ENCODE measurements at regions of chr1 and their contacts with region 1.

Region 1: GRCh38 chr1:243568793-243569192 is 281.2 kb downstream of the AKT3 start:
- DNase-seq: peak; percentile 69
- H3K4me3 ChIP-seq: no peak overlapping the region
- H3K27ac ChIP-seq: no peak overlapping the region
- H3K4me1 ChIP-seq: peaks cover 3% of the 10 kb centered on the region
- H3K27me3 ChIP-seq: no peaks in the 10 kb centered on the region
- CTCF ChIP-seq: no peak
- POLR2A ChIP-seq: no peak

Region 2: DNA sequence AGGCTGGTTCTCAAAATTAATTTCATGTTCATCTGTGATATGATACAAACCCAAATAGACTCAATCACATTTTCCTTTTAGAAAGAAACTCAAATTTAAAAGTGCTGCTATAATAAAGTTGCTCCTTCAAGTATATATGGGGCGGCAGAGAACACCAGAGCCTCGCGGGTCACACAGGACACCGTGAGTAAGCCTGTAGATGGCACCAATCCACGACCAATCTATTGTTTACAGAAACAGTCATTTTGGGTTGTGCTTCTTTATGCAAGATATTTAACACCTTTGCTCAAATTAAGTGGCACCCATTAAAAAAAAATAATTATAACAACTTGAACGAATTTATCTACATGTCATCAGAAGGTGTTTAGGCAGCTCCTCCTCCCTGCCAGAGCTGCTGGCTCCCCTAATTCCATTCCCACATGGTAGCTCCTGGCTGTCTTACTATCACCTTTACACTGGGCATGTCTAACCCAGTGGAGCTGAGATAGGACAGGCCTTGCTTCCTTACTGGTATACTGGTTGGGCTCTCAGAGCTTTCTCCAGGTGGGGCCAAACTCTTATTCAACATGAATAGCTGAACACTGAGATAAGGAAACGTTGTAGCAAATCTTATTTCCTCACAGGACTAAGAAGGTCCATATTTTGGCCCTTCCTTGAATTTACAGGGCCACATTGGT is 25.9 kb before region 1 on chr1:
- CTCF ChIA-PET with region 1: no interaction called
- POLR2A ChIA-PET with region 1: no interaction called
- dilution Hi-C with region 1: no loop called
- intact Hi-C with region 1: loop called (anchors 1 kb)
- DNase-seq: no peak
- H3K4me3 ChIP-seq: no peak overlapping the region
- H3K27ac ChIP-seq: no peak overlapping the region
- H3K4me1 ChIP-seq: no peaks in the 10 kb centered on the region
- H3K27me3 ChIP-seq: no peaks in the 10 kb centered on the region
- CTCF ChIP-seq: no peak
- POLR2A ChIP-seq: no peak

Region 3: DNA sequence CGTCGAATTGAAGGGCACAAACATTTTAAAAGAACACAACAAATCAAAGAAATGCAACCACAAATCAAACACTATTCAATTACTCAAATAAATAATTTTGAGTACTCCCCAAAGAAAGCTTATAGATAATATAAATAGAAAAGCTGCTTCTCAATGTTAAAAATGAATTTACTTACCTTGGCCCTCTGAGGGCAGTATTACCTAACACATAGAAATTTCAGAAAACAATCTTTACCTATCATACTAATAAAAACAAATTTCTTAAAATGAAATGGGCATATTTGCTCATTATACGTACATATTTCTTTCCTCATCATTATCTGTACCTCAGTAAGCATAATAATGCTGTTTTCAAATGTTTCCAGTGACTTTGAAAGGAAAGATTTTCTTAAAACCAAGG is 139.4 kb after region 1 on chr1:
- CTCF ChIA-PET with region 1: no interaction called
- POLR2A ChIA-PET with region 1: no interaction called
- dilution Hi-C with region 1: no loop called
- intact Hi-C with region 1: no loop called
- DNase-seq: peak; percentile 40
- H3K4me3 ChIP-seq: no peak overlapping the region
- H3K27ac ChIP-seq: no peak overlapping the region
- H3K4me1 ChIP-seq: peaks cover 2% of the 10 kb centered on the region
- H3K27me3 ChIP-seq: no peaks in the 10 kb centered on the region
- CTCF ChIP-seq: no peak
- POLR2A ChIP-seq: no peak

Measured in endothelial cell of umbilical vein (primary cell).